ENCODE measurements at regions of chr1 and their contacts with region 1.

Region 1: DNA sequence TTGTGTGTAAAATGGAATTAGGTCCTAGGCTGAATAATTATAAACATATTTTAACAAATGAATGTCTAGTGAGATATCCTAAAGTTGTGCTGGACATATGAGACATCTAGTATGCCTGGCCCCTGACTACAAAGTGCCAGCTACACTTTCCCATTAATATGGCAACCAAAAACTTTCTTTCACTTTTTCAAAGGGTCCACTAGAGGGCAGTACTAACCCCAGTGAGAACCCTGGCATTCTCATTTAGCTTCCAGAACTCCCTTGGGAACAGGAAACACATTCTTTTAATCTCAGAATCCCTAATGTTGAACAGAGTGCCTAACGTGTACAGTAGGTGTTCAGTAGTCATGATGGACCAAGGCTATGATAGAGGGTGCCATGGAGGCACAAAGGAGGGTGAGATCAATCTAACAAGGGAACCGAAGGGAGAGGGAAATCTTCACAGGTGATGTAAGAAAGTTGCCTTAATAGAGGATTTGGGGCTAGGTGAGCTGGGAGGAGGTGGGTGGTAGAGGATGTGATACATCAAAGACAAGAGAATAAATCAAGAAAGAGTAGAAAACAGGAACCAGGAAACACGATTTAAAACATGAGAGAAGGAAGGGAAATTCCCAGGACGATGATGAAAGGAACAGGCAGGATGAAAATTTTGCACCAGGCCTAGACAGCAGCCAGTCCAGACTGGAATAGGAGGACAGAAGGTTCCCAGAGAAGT is 41.6 kb downstream of the NSL1 start:
- DNase-seq: peak; percentile 27
- H3K4me3 Mint-ChIP-seq: peak overlapping the region; percentile 45
- H3K27ac Mint-ChIP-seq: peak overlapping the region; percentile 81
- H3K4me1 Mint-ChIP-seq: peaks cover 73% of the 10 kb centered on the region
- H3K27me3 Mint-ChIP-seq: no peaks in the 10 kb centered on the region

Region 2: GRCh38 chr1:212721388-212722247 is 28.4 kb before region 1 on chr1:
- CTCF ChIA-PET with region 1: interaction called, 25 read pairs
- POLR2A ChIA-PET with region 1: interaction called, 5 read pairs
- intact Hi-C with region 1: loop called (anchors 1 kb)
- DNase-seq: peak; percentile 77
- H3K4me3 Mint-ChIP-seq: peak overlapping the region; percentile 63
- H3K27ac Mint-ChIP-seq: peak overlapping the region; percentile 94
- H3K4me1 Mint-ChIP-seq: peaks cover 58% of the 10 kb centered on the region
- H3K27me3 Mint-ChIP-seq: peaks cover 3% of the 10 kb centered on the region

Region 3: GRCh38 chr1:212738330-212738729 is 11.6 kb before region 1 on chr1:
- CTCF ChIA-PET with region 1: interaction called, 24 read pairs
- POLR2A ChIA-PET with region 1: interaction called, 4 read pairs
- intact Hi-C with region 1: loop called (anchors 1 kb)
- DNase-seq: no peak
- H3K4me3 Mint-ChIP-seq: no peak overlapping the region
- H3K27ac Mint-ChIP-seq: peak overlapping the region; percentile 89
- H3K4me1 Mint-ChIP-seq: peaks cover 33% of the 10 kb centered on the region
- H3K27me3 Mint-ChIP-seq: no peaks in the 10 kb centered on the region

Region 4: DNA sequence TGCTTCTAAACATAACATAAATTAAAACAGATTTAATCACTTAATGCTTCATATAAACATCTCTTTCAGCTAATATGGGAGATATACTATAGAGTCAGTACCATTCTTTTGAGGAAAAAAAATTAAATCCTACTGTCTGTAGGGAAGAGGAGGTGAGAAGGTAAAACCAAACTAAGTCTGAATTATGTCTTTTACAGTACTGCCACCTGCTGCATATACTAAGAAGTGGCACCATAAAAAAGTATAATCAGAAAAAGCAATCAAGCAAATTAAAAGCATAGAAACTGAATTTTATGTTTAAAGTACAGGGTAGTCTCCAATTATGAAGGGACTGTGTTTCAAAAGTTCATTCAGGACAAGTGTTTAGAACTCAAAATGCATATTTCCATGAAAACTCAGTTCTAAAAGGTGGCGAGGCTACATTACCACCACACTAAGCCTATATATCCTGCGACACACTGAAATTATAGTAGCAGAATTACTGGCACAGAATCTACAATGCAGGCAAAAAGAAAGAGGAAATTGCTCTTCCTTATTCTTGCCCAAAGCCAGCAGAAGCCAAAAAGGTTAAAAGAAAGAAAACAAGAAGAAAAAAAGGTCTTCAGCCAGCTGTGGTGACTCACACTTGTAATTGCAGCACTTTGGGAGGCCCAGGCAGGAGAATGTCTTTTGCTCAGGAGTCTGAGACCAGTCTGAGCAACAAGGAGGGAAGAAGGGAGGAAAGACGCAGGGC is 32.6 kb after region 1 on chr1:
- CTCF ChIA-PET with region 1: interaction called, 14 read pairs
- POLR2A ChIA-PET with region 1: no interaction called
- intact Hi-C with region 1: loop called (anchors 5 kb)
- DNase-seq: no peak
- H3K4me3 Mint-ChIP-seq: no peak overlapping the region
- H3K27ac Mint-ChIP-seq: peak overlapping the region; percentile 6
- H3K4me1 Mint-ChIP-seq: peaks cover 37% of the 10 kb centered on the region
- H3K27me3 Mint-ChIP-seq: no peaks in the 10 kb centered on the region